Calu3 (cell line): ENCODE measurements at regions of chr15 and their contacts with region 1.

Region 1: GRCh38 chr15:39756806-39757522 is 25.7 kb downstream of the FSIP1 start:
- DNase-seq: peak; percentile 17
- H3K4me3 Mint-ChIP-seq: no peak overlapping the region
- H3K27ac Mint-ChIP-seq: no peak overlapping the region
- H3K4me1 Mint-ChIP-seq: no peaks in the 10 kb centered on the region
- H3K27me3 Mint-ChIP-seq: no peaks in the 10 kb centered on the region
- CTCF ChIP-seq: no peak

Region 2: GRCh38 chr15:38707802-38708671 is 1048.9 kb before region 1 on chr15:
- CTCF ChIA-PET with region 1: interaction called, 4 read pairs
- intact Hi-C with region 1: loop called (anchors 5 kb)
- DNase-seq: peak; percentile 43
- H3K4me3 Mint-ChIP-seq: no peak overlapping the region
- H3K27ac Mint-ChIP-seq: no peak overlapping the region
- H3K4me1 Mint-ChIP-seq: no peaks in the 10 kb centered on the region
- H3K27me3 Mint-ChIP-seq: no peaks in the 10 kb centered on the region
- CTCF ChIP-seq: no peak

Region 3: GRCh38 chr15:39594056-39594763 is 162.8 kb before region 1 on chr15:
- CTCF ChIA-PET with region 1: interaction called, 3 read pairs
- intact Hi-C with region 1: loop called (anchors 5 kb)
- DNase-seq: no peak
- H3K4me3 Mint-ChIP-seq: no peak overlapping the region
- H3K27ac Mint-ChIP-seq: no peak overlapping the region
- H3K4me1 Mint-ChIP-seq: no peaks in the 10 kb centered on the region
- H3K27me3 Mint-ChIP-seq: no peaks in the 10 kb centered on the region
- CTCF ChIP-seq: no peak

Region 4: GRCh38 chr15:39686000-39686613 is 70.9 kb before region 1 on chr15:
- CTCF ChIA-PET with region 1: interaction called, 20 read pairs
- intact Hi-C with region 1: loop called (anchors 1 kb)
- DNase-seq: peak; percentile 21
- H3K4me3 Mint-ChIP-seq: no peak overlapping the region
- H3K27ac Mint-ChIP-seq: no peak overlapping the region
- H3K4me1 Mint-ChIP-seq: no peaks in the 10 kb centered on the region
- H3K27me3 Mint-ChIP-seq: no peaks in the 10 kb centered on the region
- CTCF ChIP-seq: peak; percentile 47